ENCODE measurements at regions of chr7 and their contacts with region 1.

Region 1: DNA sequence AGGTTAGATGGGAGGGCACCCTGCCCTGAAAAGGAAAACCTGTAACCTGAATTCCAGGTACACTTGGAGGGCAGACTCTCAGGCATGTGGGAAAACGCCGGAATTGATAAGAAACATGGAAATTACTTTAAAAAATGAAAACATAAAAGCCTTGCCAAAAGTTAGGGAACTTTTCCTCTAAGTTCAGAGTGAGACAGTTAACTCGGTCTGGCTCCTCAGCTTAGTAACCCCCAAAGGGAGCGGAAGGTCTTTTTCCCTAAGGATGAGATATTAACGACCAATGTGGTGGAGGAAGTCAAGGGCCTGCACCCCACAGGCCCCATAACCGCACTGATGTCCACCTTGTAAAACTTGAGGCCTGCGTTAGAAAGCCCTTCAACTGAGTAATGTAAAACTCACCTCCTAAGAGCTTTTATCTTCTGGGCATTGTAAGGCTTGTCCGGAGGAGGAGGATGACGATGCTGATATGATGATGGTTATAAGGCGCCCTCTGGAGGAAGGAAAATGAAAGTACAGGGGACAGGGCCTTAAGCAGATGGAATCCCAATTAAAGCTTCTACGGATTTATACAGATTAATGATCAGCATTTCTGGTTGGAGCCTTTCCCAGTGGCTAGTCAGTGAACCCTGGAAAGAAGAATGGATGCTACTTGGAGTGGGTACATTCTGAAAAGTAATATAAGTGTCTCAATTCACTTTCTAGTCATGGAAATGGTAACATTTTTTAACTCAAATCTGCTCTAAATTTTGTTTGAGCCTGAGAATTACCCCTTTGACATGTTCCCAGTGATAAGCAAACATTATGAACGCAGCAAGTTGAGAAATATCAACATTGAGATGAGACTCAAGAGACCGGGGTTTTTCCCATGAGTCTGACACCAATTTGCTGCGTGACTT is 694 bp downstream of the COL1A2 start:
- DNase-seq: peak; percentile 63
- H3K4me3 ChIP-seq: no peak overlapping the region
- H3K27ac ChIP-seq: no peak overlapping the region
- H3K4me1 ChIP-seq: peaks cover 15% of the 10 kb centered on the region
- H3K27me3 ChIP-seq: peaks cover 2% of the 10 kb centered on the region
- CTCF ChIP-seq: peak; percentile 78 to 80

Region 2: DNA sequence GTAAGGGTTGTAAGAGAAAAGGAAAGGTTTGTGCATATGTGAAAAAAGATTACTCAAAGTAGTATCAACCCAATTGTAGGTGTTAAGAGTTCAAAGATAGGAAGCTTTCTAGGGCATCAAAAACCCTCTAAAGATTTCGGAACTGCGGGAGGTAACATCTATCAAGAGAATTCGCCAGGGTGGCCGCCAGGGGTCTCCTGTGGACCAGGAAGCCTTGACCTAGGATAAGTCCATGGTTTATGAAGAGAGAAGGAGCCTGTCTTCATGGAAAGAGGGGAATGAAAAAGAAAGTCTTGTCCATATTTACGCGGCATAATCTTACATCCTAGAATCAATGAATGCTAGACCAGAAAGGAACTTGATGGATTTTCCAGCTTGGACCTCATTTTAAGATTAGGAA is 680.2 kb before region 1 on chr7:
- CTCF ChIA-PET with region 1: no interaction called
- dilution Hi-C with region 1: no loop called
- in situ Hi-C with region 1: no loop called
- intact Hi-C with region 1: loop called (anchors 5 kb)
- DNase-seq: peak; percentile 16
- H3K4me3 ChIP-seq: no peak overlapping the region
- H3K27ac ChIP-seq: no peak overlapping the region
- H3K4me1 ChIP-seq: peaks cover 18% of the 10 kb centered on the region
- H3K27me3 ChIP-seq: peaks cover 14% of the 10 kb centered on the region
- CTCF ChIP-seq: peak; percentile 57 to 62

Region 3: DNA sequence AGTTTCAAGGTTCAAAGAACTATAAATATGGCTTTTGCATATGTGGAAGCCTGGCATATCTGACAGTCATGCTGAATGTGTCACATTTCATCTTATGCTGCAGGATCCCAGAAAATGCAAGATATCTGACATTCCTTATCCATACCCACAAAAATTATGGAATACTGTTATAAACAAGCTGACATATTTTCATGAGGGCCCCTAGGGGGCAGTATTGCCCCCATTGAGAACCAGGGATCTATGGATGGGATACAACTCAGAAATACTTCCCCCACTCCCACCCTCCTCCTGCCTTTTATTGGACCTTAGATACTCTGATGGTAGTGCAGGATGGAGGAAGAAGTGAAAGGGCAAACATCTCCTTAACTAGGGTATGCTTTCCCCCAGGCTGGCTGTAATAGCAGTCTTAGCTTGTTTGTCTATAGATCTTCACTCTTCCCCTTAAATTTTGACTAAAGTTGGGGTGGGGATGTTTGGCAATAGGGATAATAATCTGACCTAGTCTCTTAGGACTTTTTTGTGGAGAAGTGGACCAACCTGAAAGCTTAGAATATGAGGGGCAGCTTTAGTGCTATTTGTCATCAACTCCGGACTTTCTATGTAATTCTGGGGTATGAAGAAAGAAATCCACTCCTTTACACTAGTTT is 492.5 kb before region 1 on chr7:
- CTCF ChIA-PET with region 1: no interaction called
- dilution Hi-C with region 1: no loop called
- in situ Hi-C with region 1: no loop called
- intact Hi-C with region 1: loop called (anchors 5 kb)
- DNase-seq: no peak
- H3K4me3 ChIP-seq: no peak overlapping the region
- H3K27ac ChIP-seq: no peak overlapping the region
- H3K4me1 ChIP-seq: no peaks in the 10 kb centered on the region
- H3K27me3 ChIP-seq: peaks cover 6% of the 10 kb centered on the region
- CTCF ChIP-seq: peak; percentile 68 to 80

Region 4: GRCh38 chr7:94111009-94111408 is 284.4 kb before region 1 on chr7:
- CTCF ChIA-PET with region 1: no interaction called
- dilution Hi-C with region 1: no loop called
- in situ Hi-C with region 1: no loop called
- intact Hi-C with region 1: loop called (anchors 10 kb)
- DNase-seq: peak; percentile 4
- H3K4me3 ChIP-seq: no peak overlapping the region
- H3K27ac ChIP-seq: no peak overlapping the region
- H3K4me1 ChIP-seq: peaks cover 4% of the 10 kb centered on the region
- H3K27me3 ChIP-seq: no peaks in the 10 kb centered on the region
- CTCF ChIP-seq: no peak

Region 5: GRCh38 chr7:94295850-94296249 is 99.5 kb before region 1 on chr7:
- CTCF ChIA-PET with region 1: interaction called, 10 read pairs
- dilution Hi-C with region 1: no loop called
- in situ Hi-C with region 1: loop called in 1 of 2 experiments (anchors 10 kb)
- intact Hi-C with region 1: loop called (anchors 1 kb)
- DNase-seq: peak; percentile 30
- H3K4me3 ChIP-seq: no peak overlapping the region
- H3K27ac ChIP-seq: no peak overlapping the region
- H3K4me1 ChIP-seq: peaks cover 19% of the 10 kb centered on the region
- H3K27me3 ChIP-seq: no peaks in the 10 kb centered on the region
- CTCF ChIP-seq: peak; percentile 34 to 60